Activated CD8-positive, alpha-beta T cell treated with anti-CD3 and anti-CD28 coated beads for 36 hours (primary cell): ENCODE measurements at regions of chr18 and their contacts with region 1.

Region 1: DNA sequence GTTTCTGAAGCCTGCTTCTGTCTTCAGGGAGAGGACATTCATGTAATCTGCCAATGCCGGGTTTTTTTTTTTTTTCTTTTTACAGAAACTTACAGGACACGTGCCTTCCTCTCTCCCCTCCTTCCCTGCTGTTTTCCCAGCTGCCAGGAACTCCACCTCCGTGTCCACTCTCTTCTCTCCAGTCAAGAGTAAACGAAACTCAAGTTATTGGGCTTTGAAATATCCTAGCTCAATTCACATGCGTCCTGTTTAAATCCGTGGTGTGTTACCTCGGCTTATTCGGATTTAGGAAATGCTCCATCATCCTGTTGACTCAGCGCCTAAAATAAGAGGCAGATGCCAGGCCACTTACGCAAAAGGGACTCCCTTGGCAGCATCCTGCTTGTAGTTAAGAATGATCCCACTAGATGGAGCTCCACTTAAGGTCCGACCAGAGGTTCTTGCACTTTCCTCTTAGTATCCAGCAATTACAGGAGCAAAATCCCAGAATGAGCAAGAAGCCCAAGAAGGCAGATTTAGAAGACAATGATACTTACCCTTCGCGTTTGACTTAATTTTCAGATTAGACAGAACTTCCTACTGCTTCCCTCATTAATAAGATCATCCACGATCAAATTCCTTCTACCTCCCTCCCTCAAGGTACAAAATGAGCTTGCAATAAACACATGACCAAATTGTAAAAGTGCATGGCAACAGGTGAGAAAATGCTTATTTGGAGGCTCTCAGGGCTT is 97.2 kb upstream of the ZCCHC2 start:
- DNase-seq: peak; percentile 75
- ATAC-seq: peak; percentile 45
- H3K4me3 Mint-ChIP-seq: no peak overlapping the region
- H3K27ac Mint-ChIP-seq: no peak overlapping the region
- H3K4me1 Mint-ChIP-seq: peaks cover 34% of the 10 kb centered on the region
- H3K27me3 Mint-ChIP-seq: peaks cover 2% of the 10 kb centered on the region
- CTCF ChIP-seq: peak; percentile 84

Region 2: DNA sequence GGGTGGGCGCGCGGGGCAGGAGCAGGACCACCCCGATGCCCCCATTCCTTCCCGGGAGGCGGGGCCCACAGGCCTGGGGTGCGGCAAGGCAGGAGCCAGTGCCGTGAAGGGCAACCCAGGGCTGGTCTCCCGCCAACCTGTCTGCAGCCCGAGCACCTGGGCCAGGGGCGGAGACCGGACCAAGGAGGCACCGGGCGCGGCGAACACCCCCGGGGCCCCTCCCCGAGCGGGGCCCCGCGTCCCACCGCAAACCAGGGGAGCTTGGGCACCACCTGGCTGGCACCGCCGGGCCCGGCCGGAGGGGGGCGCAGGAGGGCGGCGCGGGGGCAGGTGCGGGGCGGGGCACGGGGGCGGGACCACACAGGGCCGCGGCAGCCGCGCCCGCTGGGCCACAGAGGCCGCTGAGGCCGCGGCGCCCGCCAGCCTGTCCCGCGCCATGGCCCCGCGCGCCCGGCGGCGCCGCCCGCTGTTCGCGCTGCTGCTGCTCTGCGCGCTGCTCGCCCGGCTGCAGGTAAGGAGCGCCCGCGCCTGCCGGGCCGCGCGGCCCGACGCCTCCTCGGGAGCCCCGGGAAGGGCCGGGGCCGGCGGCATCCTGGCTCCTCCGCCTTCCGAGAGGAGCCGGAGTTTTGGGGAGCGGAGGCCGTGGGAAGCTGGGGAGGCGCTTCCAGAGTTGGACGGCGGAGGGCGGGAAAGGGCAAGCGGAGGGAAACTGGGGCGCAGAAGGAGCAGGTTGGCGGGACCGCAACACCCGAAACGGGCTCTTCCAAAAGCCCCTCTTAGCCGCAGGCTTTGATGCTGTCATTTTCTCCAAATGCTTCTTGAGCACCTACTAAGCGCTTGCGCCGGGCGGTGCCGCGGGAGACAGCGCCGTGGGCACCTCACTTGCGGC is 100.5 kb before region 1 on chr18 and contains the start of gene TNFRSF11A:
- CTCF ChIA-PET with region 1: interaction called, 11 read pairs
- POLR2A ChIA-PET with region 1: no interaction called
- intact Hi-C with region 1: no loop called
- DNase-seq: peak; percentile 67
- ATAC-seq: peak; percentile 82
- H3K4me3 Mint-ChIP-seq: peak within 1 kb of the TSS; percentile 77
- H3K27ac Mint-ChIP-seq: peak within 1 kb of the TSS; percentile 62
- H3K4me1 Mint-ChIP-seq: peaks cover 36% of the 10 kb centered on the region
- H3K27me3 Mint-ChIP-seq: peaks cover 68% of the 10 kb centered on the region
- CTCF ChIP-seq: peak; percentile 64
- total RNA-seq, gene TNFRSF11A: 7.3 to 8.0 TPM

Region 3: GRCh38 chr18:62379051-62379450 is 46.6 kb before region 1 on chr18:
- CTCF ChIA-PET with region 1: no interaction called
- POLR2A ChIA-PET with region 1: no interaction called
- intact Hi-C with region 1: no loop called
- DNase-seq: no peak
- ATAC-seq: no peak
- H3K4me3 Mint-ChIP-seq: no peak overlapping the region
- H3K27ac Mint-ChIP-seq: no peak overlapping the region
- H3K4me1 Mint-ChIP-seq: peaks cover 3% of the 10 kb centered on the region
- H3K27me3 Mint-ChIP-seq: no peaks in the 10 kb centered on the region
- CTCF ChIP-seq: no peak

Region 4: GRCh38 chr18:62437235-62438017 is 11.8 kb after region 1 on chr18:
- CTCF ChIA-PET with region 1: interaction called, 38 read pairs
- POLR2A ChIA-PET with region 1: interaction called, 3 read pairs
- intact Hi-C with region 1: no loop called
- DNase-seq: no peak
- ATAC-seq: no peak
- H3K4me3 Mint-ChIP-seq: no peak overlapping the region
- H3K27ac Mint-ChIP-seq: no peak overlapping the region
- H3K4me1 Mint-ChIP-seq: no peaks in the 10 kb centered on the region
- H3K27me3 Mint-ChIP-seq: peaks cover 3% of the 10 kb centered on the region
- CTCF ChIP-seq: no peak

Region 5: DNA sequence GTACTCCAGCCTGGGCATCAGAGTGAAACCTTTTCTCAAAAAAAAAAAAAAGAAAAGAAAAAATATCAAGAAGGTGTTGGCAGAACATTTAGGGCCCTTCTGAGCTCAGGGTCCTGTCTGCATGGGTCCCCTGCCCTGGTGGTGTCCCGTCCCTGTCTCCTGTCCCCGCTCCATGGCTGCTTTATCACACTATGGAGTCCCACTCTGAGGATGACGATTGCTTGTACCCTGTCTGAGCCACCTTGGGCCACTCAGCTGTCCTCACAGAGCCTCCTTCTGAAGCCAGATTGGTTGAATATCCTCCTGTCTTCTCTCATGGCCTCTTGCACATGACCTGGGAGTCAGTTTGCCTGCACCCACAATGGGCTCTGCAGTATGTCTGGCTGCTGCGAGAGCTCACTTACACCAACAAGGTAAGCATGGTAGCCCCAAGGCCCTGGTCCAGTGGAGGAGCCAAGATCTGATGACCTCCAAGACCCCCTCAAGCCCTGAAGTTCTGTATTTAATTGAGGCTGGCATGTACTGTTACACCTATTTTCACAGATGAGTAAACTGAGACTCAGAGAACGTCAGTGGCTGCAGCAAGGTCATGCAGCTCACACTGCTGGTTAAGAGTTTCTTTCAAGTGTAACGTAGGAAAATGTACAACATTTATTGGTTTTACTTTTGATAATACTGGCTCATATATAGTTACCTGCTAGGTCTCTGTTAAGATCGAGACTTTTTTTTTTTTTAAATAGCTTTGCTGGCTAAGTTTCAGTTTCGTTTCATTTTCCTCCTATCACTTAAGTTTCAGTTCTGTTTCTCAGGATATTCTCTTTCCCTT is 80.3 kb after region 1 on chr18:
- CTCF ChIA-PET with region 1: interaction called, 8 read pairs
- POLR2A ChIA-PET with region 1: interaction called, 3 read pairs
- intact Hi-C with region 1: loop called (anchors 5 kb)
- DNase-seq: peak; percentile 58
- ATAC-seq: peak; percentile 96
- H3K4me3 Mint-ChIP-seq: peak overlapping the region; percentile 68
- H3K27ac Mint-ChIP-seq: peak overlapping the region; percentile 97
- H3K4me1 Mint-ChIP-seq: peaks cover 25% of the 10 kb centered on the region
- H3K27me3 Mint-ChIP-seq: no peaks in the 10 kb centered on the region
- CTCF ChIP-seq: no peak

Region 6: DNA sequence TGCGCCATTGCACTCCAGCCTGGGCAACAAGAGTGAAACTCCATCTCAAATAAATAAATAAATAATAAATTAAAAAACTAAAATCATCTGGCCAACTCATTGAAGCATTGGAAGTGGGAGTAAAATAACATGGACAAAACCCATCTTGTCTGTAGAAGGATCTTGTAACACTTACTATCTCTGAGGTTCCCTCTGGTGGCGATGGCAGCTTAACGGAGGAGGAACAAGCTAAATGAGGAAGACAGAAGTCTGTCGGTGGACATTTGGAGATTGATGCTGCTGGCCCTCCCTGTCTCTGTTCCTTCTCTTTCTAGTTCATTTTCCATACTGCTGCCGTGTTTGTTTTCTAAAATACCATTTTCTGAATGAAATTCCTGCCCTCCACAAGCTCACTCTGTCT is 140.6 kb after region 1 on chr18:
- CTCF ChIA-PET with region 1: interaction called, 12 read pairs
- POLR2A ChIA-PET with region 1: no interaction called
- intact Hi-C with region 1: loop called (anchors 5 kb)
- DNase-seq: peak; percentile 23
- ATAC-seq: no peak
- H3K4me3 Mint-ChIP-seq: no peak overlapping the region
- H3K27ac Mint-ChIP-seq: no peak overlapping the region
- H3K4me1 Mint-ChIP-seq: peaks cover 3% of the 10 kb centered on the region
- H3K27me3 Mint-ChIP-seq: no peaks in the 10 kb centered on the region
- CTCF ChIP-seq: no peak

Region 7: DNA sequence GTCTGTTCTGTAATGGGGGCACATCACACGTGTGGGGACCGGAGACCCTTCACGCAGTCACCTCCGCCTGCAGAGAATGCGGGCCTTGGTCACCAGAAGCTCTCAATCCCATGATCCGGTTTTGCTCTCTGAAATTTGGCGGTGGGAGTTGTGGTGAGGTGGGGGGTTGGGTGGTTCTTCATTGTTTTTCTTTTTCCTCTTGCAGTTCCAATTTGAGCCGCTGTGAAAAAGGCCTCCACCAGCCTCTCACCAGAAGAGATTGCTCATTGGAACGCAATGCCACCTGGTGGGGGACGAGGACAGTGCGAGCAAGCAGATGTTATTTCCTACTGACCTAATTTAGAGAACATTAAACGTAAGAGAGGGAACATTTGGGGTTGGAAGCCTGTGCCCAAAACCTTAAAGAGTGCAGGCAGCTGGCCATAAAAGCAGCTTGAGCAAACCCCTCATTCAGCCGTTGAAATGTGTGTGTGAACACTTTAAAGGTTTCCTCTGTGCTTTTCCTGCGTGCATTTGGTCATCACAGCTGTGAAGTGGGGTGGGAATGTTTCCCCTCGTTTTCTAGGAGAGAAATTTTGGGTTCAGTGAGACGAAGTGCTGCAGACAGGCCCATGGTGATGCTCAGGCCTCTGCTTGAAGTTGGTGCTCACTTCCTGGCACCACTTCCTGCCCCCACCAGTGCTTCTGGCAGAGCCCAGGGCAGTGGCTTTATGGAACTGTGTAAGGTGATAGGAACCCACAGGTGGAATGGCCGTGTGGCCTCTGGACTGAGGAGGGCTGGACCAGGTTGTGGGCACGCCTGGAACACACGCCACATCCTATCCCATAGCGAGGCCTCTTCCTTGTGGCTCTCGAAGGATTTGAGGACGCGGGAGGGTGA is 158.9 kb after region 1 on chr18:
- CTCF ChIA-PET with region 1: interaction called, 65 read pairs
- POLR2A ChIA-PET with region 1: interaction called, 4 read pairs
- intact Hi-C with region 1: no loop called
- DNase-seq: peak; percentile 94
- ATAC-seq: peak; percentile 85
- H3K4me3 Mint-ChIP-seq: peak overlapping the region; percentile 4
- H3K27ac Mint-ChIP-seq: peak overlapping the region; percentile 85
- H3K4me1 Mint-ChIP-seq: peaks cover 40% of the 10 kb centered on the region
- H3K27me3 Mint-ChIP-seq: no peaks in the 10 kb centered on the region
- CTCF ChIP-seq: peak; percentile 99